ENCODE measurements at regions of chr2 and their contacts with region 1.

Region 1: DNA sequence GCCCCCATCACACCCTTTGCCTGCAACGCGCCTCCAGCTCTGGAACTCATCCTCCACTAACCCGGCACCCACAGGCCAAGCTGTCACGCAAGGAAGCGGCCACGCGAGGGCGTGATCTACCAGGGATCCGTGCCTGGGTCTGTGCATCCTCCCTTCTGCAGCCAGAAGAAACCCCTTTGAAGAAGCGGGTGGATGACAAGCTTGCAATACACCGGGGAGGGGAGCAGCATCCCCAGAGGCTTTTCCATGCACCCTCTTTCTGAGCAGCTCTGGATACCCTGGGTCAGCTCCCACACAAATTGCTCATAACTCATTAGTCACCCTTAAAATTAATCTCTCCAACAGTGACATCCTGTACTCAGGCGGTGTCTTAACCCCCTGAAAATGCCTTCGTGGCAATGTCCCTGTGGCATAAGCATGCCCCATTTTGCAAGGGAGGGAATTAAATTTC is 47.6 kb downstream of the PDCL3 start:
- DNase-seq: no peak
- H3K4me3 ChIP-seq: no peak overlapping the region
- CTCF ChIP-seq: peak; percentile 90

Region 2: DNA sequence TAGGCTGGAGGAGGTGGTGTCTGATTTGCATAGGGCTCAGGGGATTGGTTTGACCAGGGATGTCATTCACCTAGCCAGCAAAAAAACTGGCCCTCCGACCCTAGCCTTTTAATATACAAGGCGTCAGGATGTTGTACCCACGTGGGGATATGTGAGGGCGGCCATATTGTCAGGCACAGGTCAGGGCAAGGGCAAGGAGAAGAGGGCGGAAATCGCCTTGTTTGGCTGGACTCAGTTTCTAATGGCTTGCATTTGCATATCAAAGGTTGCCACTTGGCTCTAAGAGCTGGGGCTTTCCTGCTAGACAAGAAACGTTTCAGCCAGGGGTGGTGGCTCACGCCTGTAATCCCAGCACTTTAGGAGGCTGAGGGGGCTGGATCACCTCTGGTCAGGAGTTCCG is 72.5 kb before region 1 on chr2:
- CTCF ChIA-PET with region 1: no interaction called
- POLR2A ChIA-PET with region 1: no interaction called
- DNase-seq: no peak
- H3K4me3 ChIP-seq: no peak overlapping the region
- CTCF ChIP-seq: no peak

Region 3: GRCh38 chr2:100577777-100578176 is 32.6 kb before region 1 on chr2:
- CTCF ChIA-PET with region 1: no interaction called
- POLR2A ChIA-PET with region 1: no interaction called
- DNase-seq: no peak
- H3K4me3 ChIP-seq: no peak overlapping the region
- CTCF ChIP-seq: no peak

Region 4: GRCh38 chr2:100588071-100588786 is 22.2 kb before region 1 on chr2:
- CTCF ChIA-PET with region 1: interaction called, 84 read pairs
- POLR2A ChIA-PET with region 1: no interaction called
- DNase-seq: no peak
- H3K4me3 ChIP-seq: no peak overlapping the region
- CTCF ChIP-seq: no peak

Region 5: GRCh38 chr2:100627330-100628300 is 17.2 kb after region 1 on chr2:
- CTCF ChIA-PET with region 1: interaction called, 11 read pairs
- POLR2A ChIA-PET with region 1: no interaction called
- DNase-seq: no peak
- H3K4me3 ChIP-seq: no peak overlapping the region
- CTCF ChIP-seq: no peak

Region 6: DNA sequence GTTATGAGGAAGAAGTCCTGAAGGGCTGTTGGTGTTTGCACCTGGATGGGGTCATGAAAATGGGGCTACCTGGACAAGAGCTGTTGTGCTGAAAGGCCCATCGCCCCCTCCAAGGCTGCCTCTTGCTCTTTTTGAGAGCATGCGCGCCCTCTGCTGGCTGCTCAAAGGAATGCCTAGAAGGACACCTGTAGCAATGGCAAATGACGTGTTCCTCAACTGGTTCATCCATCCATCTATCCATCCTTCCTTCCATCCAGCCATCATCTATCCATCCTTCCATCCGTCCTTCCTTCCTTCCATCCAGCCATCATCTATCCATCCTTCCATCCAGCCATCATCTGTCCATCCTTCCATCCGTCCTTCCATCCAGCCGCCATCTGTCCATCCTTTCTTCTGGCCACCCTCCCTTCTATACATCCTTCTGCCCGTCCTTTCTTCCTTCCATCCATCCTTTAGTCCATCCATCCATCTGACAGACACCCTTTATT is 374.5 kb after region 1 on chr2:
- CTCF ChIA-PET with region 1: interaction called, 32 read pairs
- POLR2A ChIA-PET with region 1: no interaction called
- DNase-seq: no peak
- H3K4me3 ChIP-seq: no peak overlapping the region
- CTCF ChIP-seq: peak; percentile 91

Region 7: GRCh38 chr2:101001691-101002561 is 391.5 kb after region 1 on chr2 and contains the start of gene RPL31:
- CTCF ChIA-PET with region 1: interaction called, 11 read pairs
- POLR2A ChIA-PET with region 1: no interaction called
- DNase-seq: peak; percentile 80
- H3K4me3 ChIP-seq: peak within 1 kb of the TSS; percentile 70
- CTCF ChIP-seq: no peak

Region 8: GRCh38 chr2:101188683-101189405 is 578.4 kb after region 1 on chr2:
- CTCF ChIA-PET with region 1: interaction called, 13 read pairs
- POLR2A ChIA-PET with region 1: no interaction called
- DNase-seq: no peak
- H3K4me3 ChIP-seq: no peak overlapping the region
- CTCF ChIP-seq: peak; percentile 73